AG04450 (cell line): ENCODE measurements at regions of chr1 and their contacts with region 1.

Region 1: DNA sequence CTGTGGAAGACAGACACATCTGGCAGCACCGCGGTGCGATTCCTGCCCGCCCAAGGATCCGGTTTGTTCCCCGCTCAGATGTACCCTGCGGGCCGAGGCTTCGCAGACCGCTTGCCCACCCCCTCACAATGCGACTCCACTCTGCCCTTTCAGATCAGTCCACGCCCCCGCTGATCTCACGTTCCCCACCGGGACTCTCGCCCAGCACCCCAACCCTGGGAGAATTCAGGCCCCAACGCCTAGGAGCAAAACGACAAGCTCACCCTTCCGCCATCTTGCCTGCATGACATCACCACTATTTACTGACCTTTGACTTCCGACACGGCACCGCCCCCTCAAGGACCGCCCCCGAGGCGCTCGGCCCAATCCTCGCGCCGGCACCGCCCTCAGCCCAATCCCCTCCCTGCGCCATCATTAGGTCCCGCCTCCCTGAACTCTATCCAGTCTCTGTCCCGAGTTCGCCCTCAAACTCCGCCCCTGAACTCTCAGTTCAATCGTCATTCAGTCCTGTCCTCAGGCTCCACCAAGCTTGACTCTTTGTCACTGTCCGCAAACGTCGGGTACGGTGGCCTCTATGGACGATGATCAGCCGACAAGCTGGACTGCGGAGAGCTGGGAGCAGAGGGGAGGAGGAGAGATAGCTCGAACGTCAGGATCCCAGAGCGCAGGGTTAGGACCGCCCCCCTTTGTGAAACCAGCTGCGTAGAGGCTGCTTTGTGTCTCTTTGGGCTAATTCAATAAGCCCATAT is at the start of gene BSDC1:
- DNase-seq: peak; percentile 93
- H3K4me3 ChIP-seq: peak within 1 kb of the TSS; percentile 90
- H3K27ac ChIP-seq: peak within 1 kb of the TSS; percentile 99
- H3K27me3 ChIP-seq: no peaks in the 10 kb centered on the region
- CTCF ChIP-seq: no peak
- polyA plus RNA-seq, gene BSDC1: 45.3 and 53.1 TPM in 2 replicates

Region 2: DNA sequence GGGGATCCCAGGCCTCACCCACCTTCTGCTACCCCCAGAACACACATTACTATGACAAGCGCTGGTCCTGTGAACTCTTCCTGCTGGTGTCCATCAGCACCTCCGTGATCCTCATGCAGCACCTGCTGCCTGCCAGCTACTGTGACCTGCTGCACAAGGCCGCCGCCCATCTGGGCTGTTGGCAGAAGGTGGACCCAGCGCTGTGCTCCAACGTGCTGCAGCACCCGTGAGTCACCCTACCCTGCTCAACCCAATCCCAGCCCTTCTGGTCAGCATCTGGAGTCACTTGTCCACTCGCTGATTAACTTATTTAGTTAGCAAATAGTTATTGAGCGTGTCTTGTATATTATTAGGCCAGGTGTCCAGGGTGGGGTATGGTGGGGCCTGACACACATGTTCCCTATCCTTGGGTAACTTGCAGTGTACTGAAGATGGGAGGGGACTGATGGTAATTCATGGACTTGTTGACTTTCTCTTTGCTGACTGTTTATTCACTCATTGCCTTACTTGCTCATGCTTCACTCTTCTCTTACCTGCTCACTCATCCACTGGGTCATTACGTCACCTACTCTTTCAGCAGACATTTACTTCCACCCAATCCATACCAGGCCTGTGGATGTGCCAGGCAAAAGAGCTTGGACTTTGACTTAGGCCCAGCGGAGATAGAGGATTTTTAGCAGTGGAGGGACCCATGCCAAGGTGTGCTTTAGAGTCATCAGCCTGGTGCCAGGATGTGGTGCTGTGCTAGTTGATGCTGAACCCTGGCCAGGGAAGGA is 299.4 kb before region 1 on chr1:
- CTCF ChIA-PET with region 1: no interaction called
- POLR2A ChIA-PET with region 1: no interaction called
- DNase-seq: no peak
- H3K4me3 ChIP-seq: no peak overlapping the region
- H3K27ac ChIP-seq: no peak overlapping the region
- H3K27me3 ChIP-seq: no peaks in the 10 kb centered on the region
- CTCF ChIP-seq: no peak

Region 3: DNA sequence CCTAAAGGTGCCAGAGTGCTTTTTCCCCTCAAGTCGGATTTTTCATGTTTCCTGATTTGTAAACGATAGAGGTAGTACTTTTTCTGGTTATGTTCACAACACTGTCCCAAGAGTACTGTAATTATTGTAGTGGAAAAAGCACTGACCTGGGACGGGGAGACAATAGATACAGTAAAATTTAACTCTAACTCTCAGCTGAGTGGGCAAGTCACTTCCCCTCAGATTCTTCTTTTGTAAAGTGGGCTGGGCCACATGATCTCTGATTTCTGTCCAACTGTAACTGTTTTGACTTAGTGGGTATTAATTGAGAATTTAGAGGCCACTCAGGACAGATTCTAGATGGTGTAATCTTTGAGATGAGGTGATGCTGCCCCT is 77.4 kb before region 1 on chr1:
- CTCF ChIA-PET with region 1: no interaction called
- POLR2A ChIA-PET with region 1: no interaction called
- DNase-seq: no peak
- H3K4me3 ChIP-seq: no peak overlapping the region
- H3K27ac ChIP-seq: no peak overlapping the region
- H3K27me3 ChIP-seq: no peaks in the 10 kb centered on the region
- CTCF ChIP-seq: no peak

Region 4: GRCh38 chr1:32372149-32372756 is 22.1 kb before region 1 on chr1:
- CTCF ChIA-PET with region 1: no interaction called
- POLR2A ChIA-PET with region 1: interaction called, 11 read pairs
- DNase-seq: no peak
- H3K4me3 ChIP-seq: no peak overlapping the region
- H3K27ac ChIP-seq: no peak overlapping the region
- H3K27me3 ChIP-seq: no peaks in the 10 kb centered on the region
- CTCF ChIP-seq: no peak

Region 5: GRCh38 chr1:32454726-32455125 is 60.4 kb after region 1 on chr1:
- CTCF ChIA-PET with region 1: no interaction called
- POLR2A ChIA-PET with region 1: no interaction called
- DNase-seq: no peak
- H3K4me3 ChIP-seq: no peak overlapping the region
- H3K27ac ChIP-seq: no peak overlapping the region
- H3K27me3 ChIP-seq: no peaks in the 10 kb centered on the region
- CTCF ChIP-seq: no peak

Region 6: DNA sequence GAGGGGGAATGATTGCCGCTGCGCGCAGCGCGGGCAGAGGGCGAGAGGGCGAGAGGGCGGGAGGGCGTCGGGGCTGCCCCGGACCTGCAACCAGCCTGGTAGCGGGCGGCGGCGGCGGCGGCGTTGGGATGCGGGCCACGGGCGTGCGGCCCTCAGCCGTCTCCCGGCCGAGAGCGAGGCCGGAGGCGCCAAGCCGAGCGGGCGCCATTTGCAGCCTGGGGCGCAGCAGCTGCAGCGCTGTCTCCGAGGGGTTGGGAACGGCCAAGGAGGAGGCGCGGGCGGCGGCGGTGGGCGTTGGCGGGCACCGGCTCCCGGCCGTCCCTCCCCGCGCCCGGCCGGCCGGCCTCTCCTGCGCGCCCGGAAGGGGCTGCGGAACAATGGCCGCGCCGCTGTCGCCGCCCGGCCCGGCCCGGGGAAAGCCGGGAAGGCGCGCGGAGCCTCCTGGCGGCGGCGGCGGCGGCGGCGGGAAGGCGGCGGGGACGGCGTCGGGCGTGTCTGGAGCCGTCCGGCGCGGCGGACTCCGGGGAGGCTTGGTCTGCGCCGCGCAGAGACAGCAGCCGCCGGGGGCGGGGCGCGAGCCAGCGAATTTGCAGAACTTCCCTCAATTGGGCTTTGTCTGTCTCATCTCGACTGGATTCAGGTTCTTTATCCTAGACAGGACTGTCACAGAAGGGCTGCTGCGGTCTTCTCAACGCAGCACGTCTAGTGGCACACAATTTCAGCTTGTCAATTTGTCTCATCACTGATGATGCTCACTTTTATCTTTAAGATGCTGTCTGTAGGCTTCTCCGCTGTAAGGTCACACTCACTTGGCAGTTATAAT is 106.3 kb after region 1 on chr1:
- CTCF ChIA-PET with region 1: no interaction called
- POLR2A ChIA-PET with region 1: no interaction called
- DNase-seq: no peak
- H3K4me3 ChIP-seq: peak overlapping the region; percentile 62
- H3K27ac ChIP-seq: peak overlapping the region; percentile 3
- H3K27me3 ChIP-seq: no peaks in the 10 kb centered on the region
- CTCF ChIP-seq: no peak